ENCODE measurements at regions of chr2 and their contacts with region 1.

Region 1: DNA sequence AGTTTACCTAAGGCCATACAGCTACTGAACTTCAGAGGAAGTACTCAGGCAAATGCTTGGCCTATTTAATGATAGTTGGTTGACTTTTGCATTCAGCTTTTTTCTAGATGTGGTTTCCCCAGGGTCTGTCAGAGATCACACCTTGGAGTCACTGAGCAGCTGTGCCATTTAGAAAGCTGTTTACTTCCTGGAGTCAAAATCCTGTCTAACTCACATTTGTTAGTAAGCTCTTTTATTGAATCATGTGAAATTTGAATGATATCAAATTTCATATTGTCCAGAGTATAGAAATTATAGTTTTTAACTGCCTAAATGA is 7.6 kb upstream of the TRIB2 start:
- DNase-seq: no peak
- ATAC-seq: no peak
- H3K4me3 ChIP-seq: no peak overlapping the region
- H3K27ac ChIP-seq: no peak overlapping the region
- H3K4me1 ChIP-seq: no peaks in the 10 kb centered on the region
- H3K27me3 ChIP-seq: no peaks in the 10 kb centered on the region
- CTCF ChIP-seq: no peak
- POLR2A ChIP-seq: no peak
- RAD21 ChIP-seq: no peak

Region 2: DNA sequence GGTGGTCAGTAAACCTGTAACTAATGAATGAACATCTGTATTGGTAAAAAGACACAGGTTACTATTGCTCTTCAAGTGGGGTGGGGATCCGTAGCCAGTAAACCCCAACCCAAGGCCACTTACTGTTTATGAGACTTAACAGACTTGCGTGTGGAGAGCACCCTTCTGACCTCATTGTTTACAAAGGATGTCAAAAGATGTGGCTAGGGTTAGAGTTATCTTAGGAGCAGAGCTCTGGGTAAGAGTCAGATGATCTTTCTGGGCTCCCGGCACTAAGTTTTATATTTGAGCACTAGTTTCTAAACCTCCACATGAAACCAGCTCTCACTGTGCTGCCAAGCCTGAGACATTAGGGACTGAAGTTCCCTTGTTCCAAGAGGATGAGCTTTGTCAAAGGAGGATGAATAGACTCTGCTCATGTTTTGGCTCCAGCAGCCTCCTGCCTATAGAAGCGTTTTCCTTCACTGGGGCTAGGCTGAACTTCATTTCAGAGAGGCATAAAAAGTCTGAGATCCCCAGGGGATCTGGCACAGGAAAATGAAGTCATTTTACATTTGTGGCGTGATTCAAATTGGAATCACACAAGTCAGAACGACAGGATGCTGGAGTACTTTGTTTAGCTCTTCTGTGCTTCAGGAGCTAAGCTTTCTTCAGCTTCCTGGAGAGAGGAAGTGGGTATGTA is 395.6 kb before region 1 on chr2:
- CTCF ChIA-PET with region 1: no interaction called
- POLR2A ChIA-PET with region 1: no interaction called
- dilution Hi-C with region 1: no loop called
- in situ Hi-C with region 1: loop called (anchors 5 kb)
- intact Hi-C with region 1: no loop called
- DNase-seq: no peak
- ATAC-seq: no peak
- H3K4me3 ChIP-seq: no peak overlapping the region
- H3K27ac ChIP-seq: no peak overlapping the region
- H3K4me1 ChIP-seq: peaks cover 11% of the 10 kb centered on the region
- H3K27me3 ChIP-seq: no peaks in the 10 kb centered on the region
- CTCF ChIP-seq: no peak
- POLR2A ChIP-seq: no peak
- RAD21 ChIP-seq: no peak

Region 3: GRCh38 chr2:12352889-12353288 is 356.3 kb before region 1 on chr2:
- CTCF ChIA-PET with region 1: no interaction called
- POLR2A ChIA-PET with region 1: no interaction called
- dilution Hi-C with region 1: no loop called
- in situ Hi-C with region 1: no loop called
- intact Hi-C with region 1: no loop called
- DNase-seq: peak; percentile 6
- ATAC-seq: no peak
- H3K4me3 ChIP-seq: no peak overlapping the region
- H3K27ac ChIP-seq: no peak overlapping the region
- H3K4me1 ChIP-seq: no peaks in the 10 kb centered on the region
- H3K27me3 ChIP-seq: 0 out of 2 replicates have a peak, but pooled peaks cover 1% of the 10 kb centered on the region
- CTCF ChIP-seq: no peak
- POLR2A ChIP-seq: no peak
- RAD21 ChIP-seq: no peak